Gastrocnemius medialis (tissue), 4 donors: ENCODE measurements at regions of chr17 and their contacts with region 1.

Region 1: GRCh38 chr17:28252436-28252835 is 66.6 kb upstream of the TMEM97 start:
- DNase-seq: no peak
- ATAC-seq: no peak
- H3K4me3 ChIP-seq: no peak overlapping the region
- H3K27ac ChIP-seq: no peak overlapping the region
- H3K4me1 ChIP-seq: peaks cover 0 to 3% of the 10 kb centered on the region in 2 donors
- H3K27me3 ChIP-seq: peaks cover 20 to 24% (median 21%) of the 10 kb centered on the region in 3 donors
- CTCF ChIP-seq: no peak
- POLR2A ChIP-seq: no peak

Region 2: DNA sequence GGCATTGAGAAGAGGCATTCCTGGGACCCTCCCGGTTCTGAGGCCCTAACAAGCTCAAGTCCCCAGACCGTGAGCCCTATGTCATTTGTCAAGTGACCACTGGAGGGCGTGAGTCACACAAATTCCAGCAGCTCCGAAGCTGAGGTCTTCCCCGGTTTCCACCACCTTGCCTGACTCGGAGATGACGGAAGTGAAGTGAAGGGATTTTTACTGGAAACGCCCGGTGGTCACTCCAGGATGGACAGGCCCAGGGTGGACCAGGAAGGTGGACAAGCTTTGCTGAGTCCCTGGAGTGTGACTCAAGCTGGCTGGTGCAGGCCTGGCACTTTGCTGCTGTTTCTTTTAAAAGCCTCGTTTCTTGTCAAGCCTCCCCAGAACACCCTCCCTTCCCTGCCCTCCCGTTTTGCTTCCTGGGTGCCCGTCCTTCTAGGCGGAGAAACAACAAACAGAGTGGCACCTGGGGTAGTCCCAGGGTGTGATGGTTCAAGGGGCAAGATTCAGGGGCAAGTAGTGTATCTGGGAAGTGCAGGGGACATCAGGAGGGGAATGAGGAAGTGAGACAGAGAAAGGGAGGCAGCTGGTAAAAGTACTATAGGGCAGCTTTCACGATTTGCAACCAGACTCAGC is 446.8 kb before region 1 on chr17:
- in situ Hi-C with region 1: no loop called
- intact Hi-C with region 1: loop called (anchors 5 kb)
- DNase-seq: peak; percentile 49 to 68
- ATAC-seq: peak; percentile 92 to 95
- H3K4me3 ChIP-seq: peak overlapping the region; percentile 28 to 52 (median 39)
- H3K27ac ChIP-seq: no peak overlapping the region
- H3K4me1 ChIP-seq: peaks cover 2 to 5% of the 10 kb centered on the region in 2 donors
- H3K27me3 ChIP-seq: no peaks in the 10 kb centered on the region
- CTCF ChIP-seq: peak; percentile 60 to 76 (median 73)
- POLR2A ChIP-seq: no peak

Region 3: DNA sequence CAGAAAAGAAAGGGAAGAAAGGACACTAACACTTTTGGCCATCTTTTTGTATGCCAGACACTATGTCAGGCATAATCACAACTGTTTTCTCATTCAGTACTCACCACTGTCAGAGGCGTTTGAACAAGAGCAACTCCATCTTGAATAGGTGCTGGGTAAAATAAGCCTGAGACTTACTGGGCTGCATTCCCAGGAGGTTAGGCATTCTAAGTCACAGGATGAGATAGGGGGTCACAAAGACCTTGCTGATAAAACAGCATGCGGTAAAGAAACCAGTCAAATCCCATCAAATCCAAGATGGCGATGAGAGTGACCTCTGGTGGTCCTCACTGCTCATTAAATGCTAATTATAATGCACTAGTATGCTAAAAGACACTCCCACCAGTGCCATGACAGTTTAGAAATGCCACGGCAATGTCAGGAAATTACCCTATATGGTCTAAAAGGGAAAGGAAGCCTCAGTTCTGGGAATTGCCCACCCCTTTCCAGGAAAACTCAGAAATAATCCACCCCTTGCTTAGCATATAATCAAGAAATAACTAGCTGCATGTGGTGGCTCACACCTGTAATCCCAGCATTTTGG is 344.4 kb before region 1 on chr17:
- in situ Hi-C with region 1: no loop called
- intact Hi-C with region 1: no loop called
- DNase-seq: no peak
- ATAC-seq: no peak
- H3K4me3 ChIP-seq: no peak overlapping the region
- H3K27ac ChIP-seq: no peak overlapping the region
- H3K4me1 ChIP-seq: no peaks in the 10 kb centered on the region
- H3K27me3 ChIP-seq: no peaks in the 10 kb centered on the region
- CTCF ChIP-seq: no peak
- POLR2A ChIP-seq: no peak

Region 4: GRCh38 chr17:29124117-29124924 is 871.9 kb after region 1 on chr17:
- in situ Hi-C with region 1: no loop called
- intact Hi-C with region 1: no loop called
- DNase-seq: no peak
- ATAC-seq: peak; percentile 68 to 73
- H3K4me3 ChIP-seq: no peak overlapping the region
- H3K27ac ChIP-seq: peak overlapping the region; percentile 92 to 98 (median 96)
- H3K4me1 ChIP-seq: peaks cover 43 to 49% of the 10 kb centered on the region in 2 donors
- H3K27me3 ChIP-seq: no peaks in the 10 kb centered on the region
- CTCF ChIP-seq: peak; percentile 59 to 67 (median 63)
- POLR2A ChIP-seq: no peak